ENCODE measurements at regions of chr6 and their contacts with region 1.

Region 1: DNA sequence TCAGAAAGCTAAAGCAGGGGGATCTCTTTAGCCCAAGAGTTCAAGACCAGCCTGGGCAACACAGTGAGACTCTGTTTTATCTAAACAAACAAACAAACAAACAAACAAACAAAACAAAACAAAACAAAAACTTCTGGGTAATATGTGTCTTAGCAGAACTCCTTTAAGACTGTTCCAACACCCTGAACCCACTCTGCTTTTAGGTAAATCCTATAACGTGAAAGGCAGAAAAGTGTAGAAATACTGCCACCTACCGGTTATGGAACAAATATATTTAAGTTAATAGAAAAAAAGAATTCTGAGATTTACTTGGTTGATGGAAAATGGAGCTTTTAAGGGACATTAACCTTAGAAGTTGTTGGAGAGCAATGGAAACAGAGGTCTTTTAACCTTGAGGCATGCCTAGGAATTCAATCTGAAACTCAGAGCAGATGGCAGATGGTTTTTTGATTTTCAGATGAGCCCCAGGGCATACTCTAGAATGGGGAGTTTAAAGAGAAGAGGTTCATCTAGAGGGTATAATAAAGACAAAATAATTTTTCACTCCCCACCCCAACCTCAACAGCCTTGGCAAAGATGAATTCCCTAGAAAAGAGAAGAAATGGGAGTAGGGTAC is 38.5 kb downstream of the SOD2 start:
- DNase-seq: peak in 2 of 4 donors; percentile 46 to 65
- ATAC-seq: peak; percentile 74
- H3K4me3 ChIP-seq: no peak overlapping the region
- H3K27ac ChIP-seq: no peak overlapping the region
- H3K4me1 ChIP-seq: no peaks in the 10 kb centered on the region
- H3K27me3 ChIP-seq: no peaks in the 10 kb centered on the region
- CTCF ChIP-seq: peak; percentile 24 to 56

Region 2: GRCh38 chr6:158853072-158853871 is 801.3 kb before region 1 on chr6:
- intact Hi-C with region 1: no loop called
- DNase-seq: peak in 3 of 4 donors; percentile 86 to 92 (median 90)
- ATAC-seq: peak; percentile 83
- H3K4me3 ChIP-seq: no peak overlapping the region
- H3K27ac ChIP-seq: peak overlapping the region; percentile 78 to 79
- H3K4me1 ChIP-seq: peaks cover 15 to 42% of the 10 kb centered on the region in 2 donors
- H3K27me3 ChIP-seq: no peaks in the 10 kb centered on the region
- CTCF ChIP-seq: no peak

Region 3: GRCh38 chr6:159174263-159174969 is 480.2 kb before region 1 on chr6:
- intact Hi-C with region 1: loop called in 1 of 2 experiments (anchors 10 kb)
- DNase-seq: peak; percentile 59 to 90 (median 79)
- ATAC-seq: peak; percentile 94
- H3K4me3 ChIP-seq: no peak overlapping the region
- H3K27ac ChIP-seq: no peak overlapping the region
- H3K4me1 ChIP-seq: peaks cover 4 to 10% of the 10 kb centered on the region in 2 donors
- H3K27me3 ChIP-seq: peaks cover 39 to 57% of the 10 kb centered on the region in 2 donors
- CTCF ChIP-seq: peak; percentile 84 to 98

Region 4: DNA sequence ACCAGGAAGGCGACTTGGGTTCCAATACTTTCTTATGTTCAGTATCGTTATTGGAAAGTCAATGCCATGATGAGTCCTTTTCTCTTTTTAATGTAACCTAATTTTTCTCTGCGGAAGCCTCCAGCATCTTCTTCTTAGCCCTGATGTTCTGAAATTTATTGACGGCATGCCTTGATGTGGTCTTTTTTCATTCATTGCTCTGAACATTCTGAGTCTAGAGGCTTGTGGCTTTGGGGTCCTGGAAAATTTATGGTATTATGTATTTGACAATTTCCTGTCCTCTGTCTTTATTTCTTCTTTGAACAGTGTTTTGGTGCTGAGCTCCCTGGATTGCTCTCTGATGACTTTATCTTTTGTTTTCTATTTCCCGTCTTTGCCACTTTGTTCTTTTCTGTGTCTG is 207.5 kb after region 1 on chr6:
- intact Hi-C with region 1: no loop called
- DNase-seq: no peak
- ATAC-seq: no peak
- H3K4me3 ChIP-seq: no peak overlapping the region
- H3K27ac ChIP-seq: no peak overlapping the region
- H3K4me1 ChIP-seq: peaks cover 0 to 6% of the 10 kb centered on the region in 2 donors
- H3K27me3 ChIP-seq: peaks cover 0 to 5% of the 10 kb centered on the region in 2 donors
- CTCF ChIP-seq: no peak

Measured in left lung (tissue), 14 donors.